T-cell (primary cell): ENCODE measurements at regions of chr1 and their contacts with region 1.

Region 1: GRCh38 chr1:113963281-113963906 is 15.9 kb upstream of the OLFML3 start:
- DNase-seq: peak in 1 of 35 experiments; percentile 46
- ATAC-seq: peak in 1 of 4 experiments; percentile 57
- H3K4me3 ChIP-seq: no peak overlapping the region
- H3K4me3 Mint-ChIP-seq: peak overlapping the region in 2 of 3 donors; percentile 23 to 37
- H3K27ac ChIP-seq: no peak overlapping the region
- H3K27ac Mint-ChIP-seq: peak overlapping the region; percentile 63 to 72
- H3K4me1 ChIP-seq: no peaks in the 10 kb centered on the region
- H3K4me1 Mint-ChIP-seq: peaks cover 13 to 23% (median 13%) of the 10 kb centered on the region in 3 donors
- H3K27me3 ChIP-seq: no peaks in the 10 kb centered on the region
- H3K27me3 Mint-ChIP-seq: no peaks in the 10 kb centered on the region

Region 2: GRCh38 chr1:113835642-113836307 is 127.6 kb before region 1 on chr1:
- CTCF ChIA-PET with region 1: interaction called, 11 to 13 read pairs
- POLR2A ChIA-PET with region 1: no interaction called
- DNase-seq: peak in 12 of 35 experiments; percentile 7 to 80 (median 23)
- ATAC-seq: no peak
- H3K4me3 ChIP-seq: no peak overlapping the region
- H3K4me3 Mint-ChIP-seq: no peak overlapping the region
- H3K27ac ChIP-seq: no peak overlapping the region
- H3K27ac Mint-ChIP-seq: peak overlapping the region; percentile 31 to 58
- H3K4me1 ChIP-seq: no peaks in the 10 kb centered on the region
- H3K4me1 Mint-ChIP-seq: peaks cover 5 to 7% (median 5%) of the 10 kb centered on the region in 3 donors
- H3K27me3 ChIP-seq: no peaks in the 10 kb centered on the region
- H3K27me3 Mint-ChIP-seq: no peaks in the 10 kb centered on the region

Region 3: GRCh38 chr1:114108751-114109255 is 145.4 kb after region 1 on chr1:
- CTCF ChIA-PET with region 1: no interaction called
- POLR2A ChIA-PET with region 1: no interaction called
- DNase-seq: no peak
- ATAC-seq: no peak
- H3K4me3 ChIP-seq: no peak overlapping the region
- H3K4me3 Mint-ChIP-seq: no peak overlapping the region
- H3K27ac ChIP-seq: no peak overlapping the region
- H3K27ac Mint-ChIP-seq: no peak overlapping the region
- H3K4me1 ChIP-seq: no peaks in the 10 kb centered on the region
- H3K4me1 Mint-ChIP-seq: peaks cover 9 to 14% (median 9%) of the 10 kb centered on the region in 3 donors
- H3K27me3 ChIP-seq: peaks cover 0 to 12% of the 10 kb centered on the region in 2 experiments
- H3K27me3 Mint-ChIP-seq: no peaks in the 10 kb centered on the region